BJ (cell line): ENCODE measurements at regions of chr10 and their contacts with region 1.

Region 1: DNA sequence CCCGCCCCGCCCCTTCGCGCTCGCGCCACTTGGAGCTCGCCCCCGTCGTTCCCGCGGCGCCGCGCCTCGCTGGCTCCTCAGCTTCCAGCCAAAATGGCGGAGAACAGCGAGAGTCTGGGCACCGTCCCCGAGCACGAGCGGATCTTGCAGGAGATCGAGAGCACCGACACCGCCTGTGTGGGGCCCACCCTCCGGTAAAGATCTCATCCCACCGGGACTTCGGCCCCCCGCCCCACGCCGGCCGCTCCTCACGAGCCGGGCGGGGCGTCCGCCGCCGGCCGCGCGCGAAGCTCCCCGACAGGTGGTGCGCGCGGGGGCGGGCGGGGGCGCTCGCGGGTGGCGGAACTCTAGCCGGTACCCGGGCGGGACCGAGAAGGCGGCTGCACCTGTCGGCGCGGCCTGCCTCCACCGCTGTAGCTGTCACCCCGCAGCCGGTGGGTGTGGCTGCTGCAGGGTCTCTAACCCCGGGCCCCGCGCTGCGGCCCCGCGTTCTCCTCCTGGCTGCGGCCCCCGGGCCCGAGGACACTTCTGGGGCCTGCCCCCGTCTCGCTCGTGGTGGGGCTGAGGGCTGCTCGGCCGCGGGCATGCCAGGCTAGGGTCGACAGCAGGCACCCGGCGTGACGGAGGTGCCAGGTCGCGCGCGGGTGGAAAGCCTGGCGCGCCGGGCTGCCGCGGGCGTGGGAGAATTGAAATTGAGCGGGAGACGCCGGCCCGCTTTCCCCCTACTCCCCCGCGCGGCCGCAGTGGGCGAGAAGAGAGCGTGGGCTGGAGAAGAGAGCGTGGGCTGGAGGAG is at the start of gene EXOC6:
- DNase-seq: no peak
- H3K4me3 ChIP-seq: peak within 1 kb of the TSS; percentile 95
- H3K27me3 ChIP-seq: no peaks in the 10 kb centered on the region
- CTCF ChIP-seq: no peak
- polyA plus RNA-seq, gene EXOC6: 9.6 and 23.8 TPM in 2 replicates

Region 2: DNA sequence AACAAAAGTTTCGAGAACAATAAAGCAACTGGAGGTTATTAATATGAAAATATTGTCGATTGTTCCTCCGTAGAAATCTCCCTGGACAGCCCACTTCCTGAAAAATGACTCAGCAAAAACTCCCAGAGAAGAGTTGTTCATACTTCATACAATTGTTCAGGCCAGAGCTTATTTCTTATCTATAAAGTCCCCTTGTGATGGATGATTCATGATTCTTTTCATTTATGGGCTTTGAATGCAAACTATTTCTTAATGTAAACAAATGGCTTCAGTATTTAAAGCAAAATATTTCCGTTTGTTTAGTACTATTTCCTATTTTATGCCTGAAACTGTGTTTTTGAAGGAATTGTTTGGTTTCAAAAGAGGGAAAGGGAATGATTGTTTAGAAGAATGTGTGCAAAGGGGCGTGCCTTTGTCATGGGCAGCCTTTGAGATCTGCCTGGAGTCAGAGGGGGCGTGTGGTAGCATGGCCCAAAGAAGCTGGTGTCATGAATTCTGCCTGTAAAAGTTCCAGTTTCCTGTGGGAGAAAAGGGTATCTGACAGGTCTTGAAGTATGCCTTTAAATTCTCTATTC is 26.5 kb before region 1 on chr10:
- CTCF ChIA-PET with region 1: interaction called, 10 read pairs
- POLR2A ChIA-PET with region 1: no interaction called
- DNase-seq: no peak
- H3K4me3 ChIP-seq: no peak overlapping the region
- H3K27me3 ChIP-seq: no peaks in the 10 kb centered on the region
- CTCF ChIP-seq: no peak

Region 3: GRCh38 chr10:92832998-92833650 is 15.5 kb before region 1 on chr10:
- CTCF ChIA-PET with region 1: interaction called, 19 read pairs
- POLR2A ChIA-PET with region 1: interaction called, 9 read pairs
- DNase-seq: no peak
- H3K4me3 ChIP-seq: no peak overlapping the region
- H3K27me3 ChIP-seq: no peaks in the 10 kb centered on the region
- CTCF ChIP-seq: no peak